ENCODE measurements at regions of chr18 and their contacts with region 1.

Region 1: GRCh38 chr18:74069178-74070055 is 78.2 kb downstream of the FBXO15 start:
- DNase-seq: peak in 1 of 10 donors; percentile 58

Region 2: DNA sequence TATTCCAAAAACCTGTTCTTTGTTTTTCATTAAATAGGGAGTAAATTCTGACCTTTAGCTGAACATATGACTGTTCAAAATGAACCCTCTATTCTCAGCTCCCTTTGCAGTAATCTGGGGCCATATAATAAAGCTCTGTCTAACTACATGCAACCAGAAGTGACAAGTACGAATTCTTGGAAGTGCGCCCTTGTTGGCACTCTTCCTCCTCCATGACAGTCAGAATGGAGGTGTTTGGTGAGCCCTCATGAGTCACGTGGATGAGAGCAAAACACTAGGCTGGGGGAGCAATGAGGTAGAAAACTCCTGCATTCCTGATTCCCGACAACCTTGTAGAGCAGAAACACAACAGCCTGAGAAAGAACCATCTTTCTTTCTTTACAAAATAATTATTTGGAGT is 474.7 kb before region 1 on chr18:
- intact Hi-C with region 1: loop called (anchors 5 kb)
- DNase-seq: no peak